Dendritic cell treated with granulocyte-macrophage colony-stimulating factor and Interleukin-4, amounts not matched to agents 40 ng/mL and 50 ng/mL, for 4 days (primary cell): ENCODE measurements at regions of chr16 and their contacts with region 1.

Region 1: DNA sequence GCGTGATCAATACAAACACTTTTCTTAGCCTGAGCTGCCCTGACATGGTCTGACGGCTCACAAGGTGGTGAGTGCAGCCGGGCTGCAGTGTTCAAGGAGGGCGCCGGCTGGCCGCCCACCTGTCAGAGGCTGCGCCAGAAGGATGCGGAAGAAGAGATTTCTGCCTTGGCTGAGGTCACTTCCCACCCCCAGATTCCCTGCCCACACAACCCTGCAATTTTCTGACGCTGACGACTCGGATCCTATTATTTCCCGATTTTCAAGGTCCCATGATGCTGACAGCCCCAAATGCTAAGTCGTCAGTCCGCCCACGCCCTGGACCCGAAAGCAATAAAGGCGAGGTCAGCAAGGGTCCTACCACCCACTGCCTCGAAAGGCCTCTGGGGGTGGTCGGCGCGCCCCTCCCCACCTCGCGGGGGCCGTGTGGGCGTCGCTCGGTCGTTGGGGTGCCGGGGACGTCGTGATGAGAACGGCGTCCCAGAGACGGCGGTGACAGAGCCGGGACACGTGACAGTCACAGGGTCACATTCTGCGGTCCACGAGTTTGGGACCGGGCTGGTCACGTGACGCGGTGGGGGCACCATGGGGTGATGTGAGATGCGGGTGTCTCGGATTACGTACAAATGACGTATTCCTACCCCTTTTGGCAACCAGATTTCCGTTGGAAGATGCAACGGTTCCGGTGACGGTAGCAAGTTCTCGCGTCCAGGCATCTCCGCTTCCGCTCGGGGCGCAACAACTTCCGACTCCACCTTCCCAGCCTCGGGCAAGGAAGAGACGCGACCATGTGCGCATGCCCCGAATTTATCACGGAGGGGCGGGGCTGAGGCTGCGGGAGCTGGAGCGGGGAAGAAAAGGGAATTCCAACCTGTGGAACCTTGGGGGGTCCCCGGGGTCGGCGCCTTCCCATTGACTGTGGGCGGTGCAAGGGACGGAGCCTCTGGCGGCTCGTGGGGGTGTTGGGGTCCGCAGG is at the start of gene STX4:
- H3K4me3 Mint-ChIP-seq: peak within 1 kb of the TSS; percentile 98
- H3K27ac Mint-ChIP-seq: peak within 1 kb of the TSS; percentile 99
- H3K4me1 Mint-ChIP-seq: peaks cover 62% of the 10 kb centered on the region
- H3K27me3 Mint-ChIP-seq: no peaks in the 10 kb centered on the region

Region 2: DNA sequence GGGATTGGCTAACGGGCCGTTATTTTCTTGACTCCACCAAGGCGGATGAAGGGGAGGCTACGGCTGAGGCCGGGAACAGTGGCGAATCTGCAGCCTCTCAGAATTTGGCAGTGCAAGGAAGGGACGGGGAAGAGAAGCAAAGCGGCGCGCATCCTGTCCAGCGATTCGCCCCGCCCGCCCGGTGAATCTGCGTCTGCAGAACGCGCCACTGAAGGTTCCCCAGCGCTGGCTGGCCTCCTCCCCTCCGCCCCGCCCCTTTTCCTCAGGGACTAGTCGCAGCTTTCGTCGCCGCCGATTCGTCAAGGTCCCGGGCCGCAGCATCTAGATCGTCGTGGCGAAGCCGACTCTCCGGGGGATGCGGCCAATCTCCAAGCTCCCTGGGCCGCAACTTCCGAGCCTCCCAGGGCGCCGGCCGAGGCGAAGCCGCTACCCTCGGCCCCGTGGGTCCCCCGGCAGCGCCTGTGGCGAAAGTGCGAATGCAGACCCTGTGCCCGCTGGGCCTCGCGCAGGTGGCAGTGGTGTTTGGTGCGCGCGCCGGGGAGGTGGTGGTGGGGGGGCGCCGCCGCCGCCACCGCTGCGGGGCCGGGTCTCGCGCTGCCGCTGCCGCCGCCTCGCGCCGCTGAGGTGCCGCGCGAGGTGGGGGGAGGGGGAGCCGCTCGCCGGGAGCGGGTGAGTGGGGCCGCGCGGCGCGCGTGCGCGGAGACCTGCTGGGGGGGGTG is 75.4 kb before region 1 on chr16 and contains the start of gene SETD1A:
- intact Hi-C with region 1: loop called (anchors 2 kb)
- H3K4me3 Mint-ChIP-seq: peak within 1 kb of the TSS; percentile 82
- H3K27ac Mint-ChIP-seq: peak within 1 kb of the TSS; percentile 98
- H3K4me1 Mint-ChIP-seq: peaks cover 35% of the 10 kb centered on the region
- H3K27me3 Mint-ChIP-seq: no peaks in the 10 kb centered on the region

Region 3: DNA sequence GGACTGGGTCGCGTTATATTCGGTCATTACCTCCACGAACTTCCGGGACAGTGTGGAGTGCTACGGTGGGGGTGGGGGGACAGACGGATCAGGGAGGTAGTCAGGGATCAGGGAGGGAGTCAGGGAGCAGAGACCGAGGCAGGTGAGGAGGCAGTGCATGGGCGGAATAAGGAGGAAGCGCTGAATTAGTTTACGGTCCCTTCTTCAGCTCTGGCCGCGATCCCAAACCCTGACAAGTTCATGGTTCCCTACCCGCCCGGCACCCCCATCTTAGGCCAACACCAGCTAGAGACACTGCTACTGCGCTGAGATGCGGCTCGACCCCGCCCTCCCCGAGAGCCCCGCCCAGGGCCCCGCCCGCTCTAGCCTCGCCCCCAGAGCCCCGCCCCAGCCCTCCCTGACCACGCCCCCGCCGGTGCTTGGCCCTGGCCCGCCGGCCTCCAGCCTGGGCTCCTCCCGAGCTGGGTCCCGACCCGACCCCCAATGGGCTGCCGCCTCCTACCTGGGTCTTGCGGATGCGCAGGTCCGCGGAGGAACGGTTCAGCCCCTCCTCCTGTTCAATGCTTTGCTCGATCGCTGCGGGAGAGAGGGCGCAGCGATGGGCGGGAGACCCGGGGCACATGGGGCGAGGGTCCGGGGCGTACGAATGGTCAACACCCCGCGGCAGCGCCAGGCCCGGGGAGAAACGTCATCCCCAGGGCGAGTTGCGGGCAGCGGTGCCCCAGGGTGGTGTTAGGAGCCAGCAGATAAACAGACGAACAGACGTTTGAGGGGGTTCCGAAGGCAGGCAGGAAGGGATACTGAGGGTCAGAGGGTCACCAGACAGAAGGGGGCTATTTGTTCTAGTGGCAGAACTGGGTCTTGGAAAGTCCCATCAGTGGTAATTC is 35.8 kb before region 1 on chr16:
- intact Hi-C with region 1: loop called (anchors 2 kb)
- H3K4me3 Mint-ChIP-seq: peak overlapping the region; percentile 75
- H3K27ac Mint-ChIP-seq: peak overlapping the region; percentile 91
- H3K4me1 Mint-ChIP-seq: peaks cover 35% of the 10 kb centered on the region
- H3K27me3 Mint-ChIP-seq: peaks cover 11% of the 10 kb centered on the region

Region 4: GRCh38 chr16:31052124-31052523 is 19.1 kb after region 1 on chr16:
- intact Hi-C with region 1: no loop called
- H3K4me3 Mint-ChIP-seq: no peak overlapping the region
- H3K27ac Mint-ChIP-seq: peak overlapping the region; percentile 73
- H3K4me1 Mint-ChIP-seq: peaks cover 45% of the 10 kb centered on the region
- H3K27me3 Mint-ChIP-seq: no peaks in the 10 kb centered on the region